ENCODE measurements at regions of chr1 and their contacts with region 1.

Region 1: DNA sequence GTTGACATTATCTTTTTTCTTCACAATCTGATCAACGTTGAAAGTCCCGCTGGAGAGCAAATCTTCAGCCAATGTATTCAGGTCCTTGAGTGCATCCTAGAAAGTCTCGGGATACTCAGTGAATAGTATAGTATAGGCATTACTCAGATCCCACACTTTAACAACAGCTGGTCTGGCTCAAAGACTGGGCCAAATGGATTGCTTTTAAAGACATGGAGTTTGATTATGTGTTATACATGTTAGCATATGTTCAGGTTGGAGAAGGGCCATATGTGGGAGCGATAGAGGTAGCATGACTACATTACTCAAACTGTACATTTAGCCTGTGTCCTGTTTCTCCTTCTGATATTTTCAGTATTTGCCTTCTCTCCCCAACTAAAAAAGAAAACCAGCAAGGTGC is 33.1 kb downstream of the OR10Z1 start:
- DNase-seq: no peak
- ATAC-seq: no peak
- H3K4me3 ChIP-seq: no peak overlapping the region
- H3K4me3 Mint-ChIP-seq: no peak overlapping the region
- H3K27ac ChIP-seq: no peak overlapping the region
- H3K27ac Mint-ChIP-seq: no peak overlapping the region
- H3K4me1 ChIP-seq: no peaks in the 10 kb centered on the region
- H3K4me1 Mint-ChIP-seq: no peaks in the 10 kb centered on the region
- H3K27me3 ChIP-seq: peaks cover 0 to 4% of the 10 kb centered on the region in 2 experiments
- H3K27me3 Mint-ChIP-seq: no peaks in the 10 kb centered on the region
- CTCF ChIP-seq: no peak

Region 2: DNA sequence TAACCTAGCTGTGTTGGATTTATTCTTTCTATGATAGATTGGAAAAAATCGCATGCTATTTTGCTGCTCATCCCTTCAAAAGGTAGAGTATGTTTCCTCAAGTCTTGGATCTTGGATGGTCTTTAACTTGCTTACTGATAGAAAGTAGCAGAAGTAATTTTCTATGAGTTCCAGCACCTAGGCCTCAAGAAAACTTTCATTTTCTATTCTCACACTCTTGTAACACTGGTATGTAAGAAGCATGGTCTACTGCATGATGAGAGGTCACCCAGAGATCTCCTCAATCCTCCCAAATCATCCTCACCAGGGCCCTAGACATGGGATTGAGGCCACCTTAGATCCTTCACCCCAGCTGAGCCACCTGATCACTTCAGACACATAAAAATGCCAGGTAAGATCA is 41.1 kb after region 1 on chr1:
- CTCF ChIA-PET with region 1: no interaction called
- POLR2A ChIA-PET with region 1: no interaction called
- intact Hi-C with region 1: loop called in 1 of 2 experiments (anchors 2 kb)
- DNase-seq: no peak
- ATAC-seq: no peak
- H3K4me3 ChIP-seq: no peak overlapping the region
- H3K4me3 Mint-ChIP-seq: no peak overlapping the region
- H3K27ac ChIP-seq: no peak overlapping the region
- H3K27ac Mint-ChIP-seq: no peak overlapping the region
- H3K4me1 ChIP-seq: no peaks in the 10 kb centered on the region
- H3K4me1 Mint-ChIP-seq: no peaks in the 10 kb centered on the region
- H3K27me3 ChIP-seq: peaks cover 0 to 10% of the 10 kb centered on the region in 2 experiments
- H3K27me3 Mint-ChIP-seq: peaks cover 24% of the 10 kb centered on the region
- CTCF ChIP-seq: no peak